Activated CD4-positive, alpha-beta T cell treated with anti-CD3 and anti-CD28 coated beads, Interleukin-2, amount 10 ng/mL, durations not matched to agents 24 days and 14 days (primary cell): ENCODE measurements at regions of chrX and their contacts with region 1.

Region 1: GRCh38 chrX:153953342-153953830 is 8.9 kb upstream of the RENBP start:
- DNase-seq: peak; percentile 93
- H3K4me3 Mint-ChIP-seq: no peak overlapping the region
- H3K27ac Mint-ChIP-seq: peak overlapping the region; percentile 20
- H3K4me1 Mint-ChIP-seq: peaks cover 7% of the 10 kb centered on the region
- H3K27me3 Mint-ChIP-seq: no peaks in the 10 kb centered on the region

Region 2: GRCh38 chrX:153763989-153764755 is 189.2 kb before region 1 on chrX and contains the start of gene PLXNB3:
- intact Hi-C with region 1: loop called (anchors 1 kb)
- DNase-seq: peak; percentile 92
- H3K4me3 Mint-ChIP-seq: no peak within 1 kb of the TSS
- H3K27ac Mint-ChIP-seq: no peak within 1 kb of the TSS
- H3K4me1 Mint-ChIP-seq: peaks cover 6% of the 10 kb centered on the region
- H3K27me3 Mint-ChIP-seq: no peaks in the 10 kb centered on the region
- total RNA-seq, gene PLXNB3: 0.43 and 0.49 TPM in 2 replicates